ENCODE measurements at regions of chr3 and their contacts with region 1.

Region 1: DNA sequence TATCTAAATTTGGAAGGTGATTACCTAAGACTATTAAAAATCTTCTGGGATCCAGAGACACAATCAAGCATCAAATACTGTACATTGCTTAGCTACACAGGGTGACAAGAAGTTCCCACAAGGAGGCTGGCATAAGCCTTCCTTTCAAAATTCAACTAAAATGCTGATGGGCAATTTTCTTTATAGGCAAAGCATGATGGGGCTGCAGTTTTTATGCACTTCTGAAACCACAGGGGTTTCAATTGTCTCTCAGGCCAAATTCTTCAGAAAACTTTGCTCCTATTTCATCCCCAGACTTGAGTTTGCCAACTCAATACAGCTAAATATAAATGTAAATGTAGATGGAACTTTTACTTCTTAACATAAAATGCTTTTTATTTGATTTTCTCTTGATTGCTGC is 241.6 kb downstream of the ZPLD1 start:
- DNase-seq: no peak
- ATAC-seq: no peak

Region 2: DNA sequence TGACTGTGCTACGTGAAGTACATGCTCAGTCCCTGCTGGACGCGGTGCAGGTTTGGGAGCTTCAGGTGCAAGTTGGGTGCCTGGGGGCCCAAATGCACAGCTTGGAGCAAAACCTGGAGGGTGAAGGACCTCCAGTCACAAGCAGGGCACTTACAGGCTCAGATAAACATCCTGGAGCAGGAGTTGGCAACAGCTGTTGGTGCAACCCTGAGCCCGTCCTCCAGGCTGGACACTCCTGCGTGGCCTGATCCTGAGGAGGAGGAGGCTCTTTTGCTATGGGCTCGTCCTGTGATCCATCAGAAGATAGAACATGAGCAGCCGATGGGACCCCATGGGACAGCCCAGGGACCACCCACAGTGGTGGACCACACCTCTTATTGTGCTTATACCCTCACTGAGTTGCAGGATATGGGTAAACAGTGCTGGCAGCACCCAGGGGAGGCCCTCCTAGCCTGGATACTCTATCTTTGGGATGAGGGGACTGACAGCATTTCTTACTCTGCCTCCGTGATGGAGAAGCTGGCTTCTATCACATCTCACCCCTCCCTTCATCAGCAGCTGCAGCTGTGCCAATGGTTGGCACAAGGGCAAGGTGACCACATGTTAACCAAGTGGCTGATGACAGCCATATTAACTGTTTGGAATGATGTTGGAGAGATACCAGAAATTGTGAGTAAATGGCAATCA is 60.0 kb after region 1 on chr3:
- intact Hi-C with region 1: loop called (anchors 5 kb)
- DNase-seq: peak; percentile 66
- ATAC-seq: peak; percentile 91

Measured in Right ventricle myocardium superior (tissue), 1 donor.